ENCODE measurements at regions of chr12 and their contacts with region 1.

Region 1: DNA sequence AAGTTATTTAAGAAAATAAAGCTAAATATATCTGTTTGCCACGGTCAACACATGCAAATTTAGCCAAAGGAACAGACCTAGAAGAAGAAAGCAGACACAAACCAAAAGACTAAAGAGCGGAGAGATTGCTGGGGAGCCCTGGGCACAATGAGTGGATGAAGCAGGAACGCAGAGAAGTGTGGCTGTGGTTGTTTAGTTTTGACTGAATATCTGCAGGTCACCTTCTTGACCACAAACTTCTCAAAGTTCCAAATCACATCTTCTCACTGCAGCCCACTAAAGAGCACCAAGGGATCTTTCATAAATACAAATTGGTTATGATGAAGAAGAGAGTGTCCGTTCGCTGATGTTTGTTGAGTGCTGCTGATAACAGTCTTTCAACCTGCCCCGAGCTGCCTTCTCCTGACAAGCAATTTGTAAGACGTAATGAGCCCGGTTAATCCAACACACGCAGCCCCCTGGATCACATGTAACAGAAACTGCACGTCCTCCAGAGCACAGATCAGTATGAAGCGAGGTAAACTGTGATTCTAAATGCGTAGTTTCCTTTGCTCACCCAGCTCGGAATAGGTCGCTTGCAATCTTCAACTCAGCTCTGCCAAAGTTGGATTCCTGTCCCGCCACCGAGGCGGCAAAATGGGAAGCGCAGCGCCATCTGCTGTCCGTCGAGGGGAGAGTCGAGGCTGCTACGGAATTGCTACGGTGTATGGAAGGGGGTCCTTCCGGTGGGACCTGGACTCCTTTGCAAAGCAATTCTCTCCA is 120.8 kb downstream of the GXYLT1 start:
- DNase-seq: peak; percentile 74
- ATAC-seq: peak; percentile 81
- H3K4me3 ChIP-seq: peak overlapping the region; percentile 4 to 62 (median 33)
- H3K4me3 Mint-ChIP-seq: peak overlapping the region; percentile 82
- H3K27ac ChIP-seq: no peak overlapping the region
- H3K27ac Mint-ChIP-seq: no peak overlapping the region
- H3K4me1 ChIP-seq: peaks cover 7 to 8% of the 10 kb centered on the region in 2 donors
- H3K4me1 Mint-ChIP-seq: peaks cover 9% of the 10 kb centered on the region
- H3K27me3 ChIP-seq: peaks cover 0 to 5% (median 0%) of the 10 kb centered on the region in 4 experiments
- H3K27me3 Mint-ChIP-seq: peaks cover 8% of the 10 kb centered on the region
- CTCF ChIP-seq: peak; percentile 99

Region 2: DNA sequence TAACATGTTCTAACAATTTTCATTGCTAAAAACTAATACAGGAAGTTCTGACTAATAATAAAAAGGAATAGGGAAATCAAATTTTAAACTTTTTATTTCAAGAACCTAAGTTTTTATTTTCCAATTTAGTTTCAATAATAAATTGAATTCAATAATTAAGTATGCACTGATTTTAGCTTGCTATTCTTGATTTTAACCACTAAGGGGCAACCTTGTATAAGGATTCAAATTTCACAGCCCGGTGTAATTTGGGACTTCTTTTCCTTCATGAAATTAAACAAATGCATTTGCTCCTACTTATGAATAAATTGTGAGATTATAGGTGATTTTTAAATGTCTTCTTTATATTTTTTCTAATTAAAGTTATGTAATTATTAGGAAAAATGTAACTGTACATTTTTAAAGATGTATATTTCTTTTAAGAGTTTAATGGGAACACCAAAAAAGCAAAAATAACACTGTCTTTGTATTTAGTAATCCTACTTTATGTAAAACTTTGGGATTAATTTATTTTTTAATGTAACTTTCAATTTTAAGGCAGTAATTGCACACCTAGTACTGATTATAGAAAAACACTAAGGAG is 1077.2 kb before region 1 on chr12:
- CTCF ChIA-PET with region 1: interaction called, 26 read pairs
- POLR2A ChIA-PET with region 1: no interaction called
- intact Hi-C with region 1: no loop called
- DNase-seq: peak; percentile 38
- ATAC-seq: no peak
- H3K4me3 ChIP-seq: no peak overlapping the region
- H3K4me3 Mint-ChIP-seq: no peak overlapping the region
- H3K27ac ChIP-seq: no peak overlapping the region
- H3K27ac Mint-ChIP-seq: no peak overlapping the region
- H3K4me1 ChIP-seq: no peaks in the 10 kb centered on the region
- H3K4me1 Mint-ChIP-seq: no peaks in the 10 kb centered on the region
- H3K27me3 ChIP-seq: peaks cover 0 to 3% (median 0%) of the 10 kb centered on the region in 4 experiments
- H3K27me3 Mint-ChIP-seq: peaks cover 9% of the 10 kb centered on the region
- CTCF ChIP-seq: peak; percentile 88

Region 3: GRCh38 chr12:41277116-41277945 is 746.6 kb before region 1 on chr12:
- CTCF ChIA-PET with region 1: interaction called, 62 read pairs
- POLR2A ChIA-PET with region 1: no interaction called
- intact Hi-C with region 1: no loop called
- DNase-seq: peak; percentile 44
- ATAC-seq: no peak
- H3K4me3 ChIP-seq: no peak overlapping the region
- H3K4me3 Mint-ChIP-seq: no peak overlapping the region
- H3K27ac ChIP-seq: no peak overlapping the region
- H3K27ac Mint-ChIP-seq: no peak overlapping the region
- H3K4me1 ChIP-seq: peaks cover 0 to 13% of the 10 kb centered on the region in 2 donors
- H3K4me1 Mint-ChIP-seq: no peaks in the 10 kb centered on the region
- H3K27me3 ChIP-seq: no peaks in the 10 kb centered on the region
- H3K27me3 Mint-ChIP-seq: peaks cover 9% of the 10 kb centered on the region
- CTCF ChIP-seq: peak; percentile 73

Region 4: GRCh38 chr12:41663598-41664258 is 360.2 kb before region 1 on chr12:
- CTCF ChIA-PET with region 1: no interaction called
- POLR2A ChIA-PET with region 1: no interaction called
- intact Hi-C with region 1: no loop called
- DNase-seq: no peak
- ATAC-seq: no peak
- H3K4me3 ChIP-seq: no peak overlapping the region
- H3K4me3 Mint-ChIP-seq: no peak overlapping the region
- H3K27ac ChIP-seq: no peak overlapping the region
- H3K27ac Mint-ChIP-seq: no peak overlapping the region
- H3K4me1 ChIP-seq: no peaks in the 10 kb centered on the region
- H3K4me1 Mint-ChIP-seq: no peaks in the 10 kb centered on the region
- H3K27me3 ChIP-seq: no peaks in the 10 kb centered on the region
- H3K27me3 Mint-ChIP-seq: no peaks in the 10 kb centered on the region
- CTCF ChIP-seq: no peak

Region 5: DNA sequence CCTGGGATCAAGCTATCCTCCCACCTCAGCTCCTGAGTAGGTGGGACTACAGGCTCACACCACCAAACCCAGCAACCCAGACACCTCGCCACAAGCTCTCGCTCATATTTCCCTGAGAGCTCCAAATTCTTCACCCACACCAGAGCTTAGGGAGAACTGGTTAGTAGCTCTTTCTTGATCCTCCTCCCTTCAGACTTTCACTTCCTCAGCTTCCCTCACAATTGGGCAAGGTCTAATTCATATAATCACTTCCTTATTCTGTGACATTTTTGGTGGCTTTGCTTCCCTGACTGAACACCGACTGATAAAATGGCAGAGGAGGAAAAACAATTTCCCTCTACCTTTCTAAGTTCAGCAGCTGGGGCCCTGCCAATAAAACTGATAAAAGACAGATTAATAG is 32.2 kb after region 1 on chr12:
- CTCF ChIA-PET with region 1: interaction called, 11 read pairs
- POLR2A ChIA-PET with region 1: no interaction called
- intact Hi-C with region 1: no loop called
- DNase-seq: peak; percentile 74
- ATAC-seq: peak; percentile 75
- H3K4me3 ChIP-seq: no peak overlapping the region
- H3K4me3 Mint-ChIP-seq: peak overlapping the region; percentile 11
- H3K27ac ChIP-seq: no peak overlapping the region
- H3K27ac Mint-ChIP-seq: no peak overlapping the region
- H3K4me1 ChIP-seq: peaks cover 11% of the 10 kb centered on the region in 2 donors
- H3K4me1 Mint-ChIP-seq: peaks cover 10% of the 10 kb centered on the region
- H3K27me3 ChIP-seq: no peaks in the 10 kb centered on the region
- H3K27me3 Mint-ChIP-seq: peaks cover 29% of the 10 kb centered on the region
- CTCF ChIP-seq: no peak

Measured in B cell (primary cell).